GM12878 (cell line): ENCODE measurements at regions of chr2 and their contacts with region 1.

Region 1: DNA sequence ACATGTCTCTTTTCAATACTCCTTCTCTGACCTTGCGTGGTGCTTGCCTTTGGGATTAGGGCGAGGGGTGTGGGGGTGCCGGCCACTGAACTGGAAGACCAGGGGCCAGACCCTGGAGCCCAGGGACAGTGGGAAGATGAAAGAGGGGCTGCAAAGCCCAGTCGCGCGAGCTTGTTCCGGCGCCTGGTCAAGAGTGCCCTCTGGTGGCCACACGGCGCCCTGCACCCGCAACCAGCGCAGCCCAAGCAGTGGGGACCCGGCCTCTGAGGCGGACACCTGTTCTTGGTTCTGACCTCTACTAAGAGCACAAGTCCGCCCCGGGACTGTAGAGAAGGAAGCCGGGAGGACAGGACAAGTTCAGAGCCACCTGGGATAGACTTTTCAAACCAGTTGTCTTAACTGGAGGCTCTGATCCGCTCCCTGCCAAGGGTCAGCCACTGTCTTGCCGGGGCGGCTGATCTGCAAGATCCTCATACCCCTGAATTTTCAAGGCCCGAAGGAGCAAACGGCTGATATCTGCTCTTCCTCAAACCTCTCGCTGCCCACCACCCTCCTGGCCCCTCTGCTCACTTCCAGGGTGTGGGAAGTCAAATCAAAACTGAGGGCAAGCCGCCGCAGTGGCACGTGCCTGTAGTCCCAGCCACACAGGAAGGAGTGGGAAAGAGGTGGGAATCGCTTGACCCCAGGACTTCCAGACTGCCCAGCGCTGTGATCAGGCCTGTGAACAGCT is 14.9 kb upstream of the MSH6 start:
- DNase-seq: no peak
- ATAC-seq: peak; percentile 96
- H3K4me3 ChIP-seq: no peak overlapping the region
- H3K27ac ChIP-seq: no peak overlapping the region
- H3K4me1 ChIP-seq: no peaks in the 10 kb centered on the region
- H3K27me3 ChIP-seq: no peaks in the 10 kb centered on the region
- CTCF ChIP-seq: peak; percentile 97 to 100 (median 97); a peak in 5 of 6 replicates
- EP300 ChIP-seq: no peak
- POLR2A ChIP-seq: no peak
- RAD21 ChIP-seq: peak; percentile 99

Region 2: GRCh38 chr2:47339745-47340541 is 428.1 kb before region 1 on chr2:
- CTCF ChIA-PET with region 1: interaction called, 98 read pairs
- POLR2A ChIA-PET with region 1: no interaction called
- RAD21 ChIA-PET with region 1: interaction called, 74 read pairs
- SMC1A ChIA-PET with region 1: interaction called, 62 read pairs
- in situ Hi-C with region 1: loop called (anchors 5 kb)
- intact Hi-C with region 1: loop called (anchors 1 kb)
- DNase-seq: no peak
- ATAC-seq: no peak
- H3K4me3 ChIP-seq: no peak overlapping the region
- H3K27ac ChIP-seq: no peak overlapping the region
- H3K4me1 ChIP-seq: peaks cover 18% of the 10 kb centered on the region
- H3K27me3 ChIP-seq: peaks cover 0 to under 1% of the 10 kb centered on the region in 2 experiments; a peak in 1 of 4 replicates
- CTCF ChIP-seq: no peak
- EP300 ChIP-seq: no peak
- POLR2A ChIP-seq: no peak
- RAD21 ChIP-seq: no peak

Region 3: DNA sequence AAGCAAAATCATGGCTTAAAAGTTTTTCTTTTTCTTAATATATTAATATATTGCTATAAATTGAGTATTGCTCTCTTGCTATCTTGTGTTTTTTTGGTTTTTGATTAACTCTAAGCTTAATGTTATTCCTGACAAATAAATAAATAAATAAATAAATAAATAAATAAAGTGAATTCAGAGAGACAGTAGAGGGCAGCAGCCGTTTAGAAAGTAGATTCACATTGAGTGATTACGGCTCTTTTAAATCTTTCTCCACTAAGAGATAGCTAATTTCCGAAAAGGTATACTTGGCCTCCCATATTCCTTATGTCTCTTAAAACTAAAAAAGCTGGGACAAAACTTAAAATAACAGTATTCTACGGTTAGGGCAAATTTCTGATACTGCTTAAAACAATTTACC is 330.8 kb before region 1 on chr2:
- CTCF ChIA-PET with region 1: interaction called, 142 read pairs
- POLR2A ChIA-PET with region 1: no interaction called
- RAD21 ChIA-PET with region 1: interaction called, 74 read pairs
- SMC1A ChIA-PET with region 1: interaction called, 94 read pairs
- in situ Hi-C with region 1: no loop called
- intact Hi-C with region 1: loop called (anchors 1 kb)
- DNase-seq: no peak
- ATAC-seq: peak; percentile 27; the same call in 1 of the 3 replicates
- H3K4me3 ChIP-seq: no peak overlapping the region
- H3K27ac ChIP-seq: no peak overlapping the region
- H3K4me1 ChIP-seq: no peaks in the 10 kb centered on the region
- H3K27me3 ChIP-seq: no peaks in the 10 kb centered on the region
- CTCF ChIP-seq: peak; percentile 14 to 37 (median 28); a peak in 4 of 6 replicates
- EP300 ChIP-seq: no peak
- POLR2A ChIP-seq: no peak
- RAD21 ChIP-seq: peak; percentile 69

Region 4: DNA sequence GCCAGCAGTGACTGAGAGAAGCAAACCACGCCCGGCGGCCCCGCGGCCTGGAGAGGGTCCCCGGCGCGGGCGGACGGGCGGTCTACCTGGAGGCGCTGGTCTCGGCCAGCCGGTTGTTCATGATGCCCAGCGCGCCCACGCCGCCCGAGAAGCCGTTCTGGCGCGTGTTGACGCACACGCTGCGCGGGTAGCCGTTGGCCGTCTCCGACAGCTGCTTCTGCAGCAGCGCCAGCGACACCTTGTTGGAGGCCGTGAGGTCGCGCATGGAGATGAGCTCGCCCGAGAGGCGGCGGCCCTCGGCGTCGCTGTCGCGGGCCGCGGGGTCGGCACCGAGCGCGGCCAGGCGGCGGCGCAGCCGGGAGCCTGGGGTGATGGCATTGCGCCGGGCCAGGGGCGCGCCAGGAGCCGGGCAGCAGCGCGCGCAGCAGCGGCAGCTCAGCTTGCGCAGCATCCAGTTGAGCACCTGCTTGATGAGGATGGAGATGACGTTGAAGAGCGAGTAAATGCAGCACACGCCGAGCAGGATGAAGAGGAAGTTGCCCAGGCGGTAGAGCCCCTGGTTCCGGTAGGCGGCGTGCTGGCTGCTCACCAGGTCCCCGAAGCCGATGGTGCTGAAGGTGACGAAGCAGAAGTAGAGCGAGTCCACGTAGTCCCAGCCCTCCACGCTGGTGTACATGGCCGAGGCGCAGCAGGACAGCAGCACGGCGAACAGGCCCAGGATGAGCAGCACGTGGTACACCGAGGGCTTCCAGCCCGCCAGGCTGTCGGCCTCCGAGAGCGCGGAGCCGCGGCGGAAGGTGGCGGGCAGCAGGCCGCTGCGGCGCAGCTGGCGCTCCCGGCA is 247.0 kb before region 1 on chr2:
- CTCF ChIA-PET with region 1: interaction called, 21 read pairs
- POLR2A ChIA-PET with region 1: no interaction called
- RAD21 ChIA-PET with region 1: interaction called, 11 read pairs
- SMC1A ChIA-PET with region 1: interaction called, 5 read pairs
- in situ Hi-C with region 1: no loop called
- intact Hi-C with region 1: loop called (anchors 2 kb)
- DNase-seq: peak; percentile 28
- ATAC-seq: peak; percentile 89
- H3K4me3 ChIP-seq: peak overlapping the region; percentile 69; the same call in 1 of the 2 replicates
- H3K27ac ChIP-seq: peak overlapping the region; percentile 33
- H3K4me1 ChIP-seq: peaks cover 15% of the 10 kb centered on the region
- H3K27me3 ChIP-seq: no peaks in the 10 kb centered on the region; a peak in 1 of 4 replicates
- CTCF ChIP-seq: peak; percentile 42 to 50 (median 48); a peak in 5 of 6 replicates
- EP300 ChIP-seq: no peak
- POLR2A ChIP-seq: peak; percentile 57
- RAD21 ChIP-seq: peak; percentile 36; the same call in 1 of the 2 replicates

Region 5: GRCh38 chr2:47719099-47719498 is 48.9 kb before region 1 on chr2:
- CTCF ChIA-PET with region 1: interaction called, 31 read pairs
- POLR2A ChIA-PET with region 1: no interaction called
- RAD21 ChIA-PET with region 1: interaction called, 15 read pairs
- SMC1A ChIA-PET with region 1: interaction called, 15 read pairs
- in situ Hi-C with region 1: no loop called
- intact Hi-C with region 1: loop called (anchors 1 kb)
- DNase-seq: peak; percentile 44
- ATAC-seq: peak; percentile 73
- H3K4me3 ChIP-seq: no peak overlapping the region
- H3K27ac ChIP-seq: peak overlapping the region; percentile 7; the same call in 1 of the 2 replicates
- H3K4me1 ChIP-seq: peaks cover 45% of the 10 kb centered on the region
- H3K27me3 ChIP-seq: no peaks in the 10 kb centered on the region
- CTCF ChIP-seq: no peak
- EP300 ChIP-seq: peak; percentile 66 to 70; a peak in 2 of 4 replicates
- POLR2A ChIP-seq: no peak
- RAD21 ChIP-seq: no peak

Region 6: DNA sequence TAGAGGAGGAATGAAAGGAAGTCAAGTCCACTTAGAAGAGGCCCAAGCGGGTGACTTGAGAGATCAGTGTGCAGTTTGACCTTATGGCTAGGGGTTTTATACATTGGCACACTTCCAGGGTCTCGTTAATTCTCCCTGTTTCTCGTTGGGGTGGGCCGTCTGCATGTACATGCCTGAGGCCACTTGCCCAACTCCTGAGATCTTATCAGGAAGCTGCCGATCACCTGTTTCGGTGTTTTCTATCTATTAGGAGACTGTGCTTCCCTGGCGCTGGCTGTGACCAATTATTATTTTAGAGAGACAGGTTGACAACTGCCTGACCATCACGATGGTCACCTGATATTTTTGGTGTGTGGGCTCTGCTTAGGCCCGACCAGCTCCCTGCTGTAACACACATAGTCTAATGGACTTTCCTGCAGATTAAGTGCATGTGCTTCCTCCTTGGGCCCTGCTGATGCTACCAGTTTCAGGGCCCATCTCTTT is 16.1 kb before region 1 on chr2:
- CTCF ChIA-PET with region 1: interaction called, 13 read pairs
- POLR2A ChIA-PET with region 1: no interaction called
- RAD21 ChIA-PET with region 1: interaction called, 54 read pairs
- SMC1A ChIA-PET with region 1: no interaction called
- in situ Hi-C with region 1: no loop called
- intact Hi-C with region 1: no loop called
- DNase-seq: no peak
- ATAC-seq: peak; percentile 6
- H3K4me3 ChIP-seq: no peak overlapping the region
- H3K27ac ChIP-seq: peak overlapping the region; percentile 87
- H3K4me1 ChIP-seq: peaks cover 33% of the 10 kb centered on the region
- H3K27me3 ChIP-seq: no peaks in the 10 kb centered on the region
- CTCF ChIP-seq: no peak
- EP300 ChIP-seq: no peak
- POLR2A ChIP-seq: no peak
- RAD21 ChIP-seq: no peak